Cardiac septum (tissue), 1 donor: ENCODE measurements at regions of chr11 and their contacts with region 1.

Region 1: GRCh38 chr11:71977743-71978418 is 20.8 kb upstream of the IL18BP start:
- DNase-seq: no peak

Region 2: DNA sequence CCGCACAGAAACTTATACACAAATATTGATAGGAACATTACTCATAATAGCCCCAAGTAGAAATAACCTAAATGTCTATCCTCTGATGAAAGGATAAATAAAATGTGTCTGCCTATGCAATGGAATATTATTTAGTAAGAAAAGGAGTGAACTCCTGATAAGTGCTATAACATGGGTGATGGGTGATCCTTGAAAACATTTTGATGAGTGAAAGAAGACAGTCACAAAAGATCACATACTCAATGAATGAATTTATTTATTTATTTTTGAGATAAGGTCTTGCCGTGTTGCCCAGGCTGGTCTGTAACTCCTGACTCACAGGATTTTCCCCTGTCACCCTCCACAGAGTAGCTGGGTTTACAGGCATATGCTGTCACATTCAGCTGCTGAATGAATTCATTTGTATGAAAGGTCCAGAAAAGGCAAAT is 31.7 kb before region 1 on chr11:
- intact Hi-C with region 1: no loop called
- DNase-seq: no peak

Region 3: DNA sequence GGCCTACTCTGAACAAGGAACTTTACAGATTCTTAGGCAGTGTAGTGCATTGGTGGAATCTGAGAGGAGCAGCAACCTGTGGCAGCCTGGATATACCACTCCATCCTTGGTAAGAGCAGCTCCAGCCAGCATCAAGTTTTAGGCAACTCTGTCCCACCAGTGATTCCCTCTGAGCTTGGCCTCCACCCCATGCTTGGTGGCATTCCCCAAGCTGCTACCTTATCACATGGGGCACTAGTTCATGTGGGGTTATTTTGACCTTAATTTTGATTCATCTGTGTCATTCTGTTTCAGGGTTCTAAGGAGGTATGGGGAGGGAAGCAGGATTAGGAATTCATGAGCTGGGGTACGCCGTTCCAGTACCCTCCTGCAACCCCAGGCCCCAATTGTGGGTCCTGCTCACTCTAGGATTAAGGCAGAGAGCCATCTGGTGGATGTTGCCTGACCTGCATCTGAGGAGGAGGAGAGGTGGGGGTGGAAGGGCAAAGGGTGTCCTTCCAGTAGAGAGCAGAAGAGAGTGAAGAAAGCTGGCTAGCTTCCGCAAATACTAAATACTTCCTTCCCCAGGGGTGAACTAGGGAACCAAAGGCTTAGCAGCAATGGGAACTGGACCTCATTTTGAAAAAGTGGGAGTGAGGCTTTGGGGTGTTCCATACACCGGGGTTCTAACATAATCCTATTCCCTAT is 113.3 kb after region 1 on chr11:
- intact Hi-C with region 1: loop called (anchors 2 kb)
- DNase-seq: peak; percentile 87

Region 4: GRCh38 chr11:72141066-72141465 is 163.2 kb after region 1 on chr11:
- intact Hi-C with region 1: loop called (anchors 5 kb)
- DNase-seq: no peak

Region 5: GRCh38 chr11:72425053-72425980 is 447.4 kb after region 1 on chr11:
- intact Hi-C with region 1: loop called (anchors 5 kb)
- DNase-seq: no peak